Prostate gland (tissue), 2 donors: ENCODE measurements at regions of chr16 and their contacts with region 1.

Region 1: GRCh38 chr16:53503270-53503923 is 388 bp upstream of the AKTIP start:
- DNase-seq: peak; percentile 100
- H3K4me3 ChIP-seq: peak overlapping the region; percentile 84 to 89
- H3K27ac ChIP-seq: peak overlapping the region; percentile 96 to 98
- H3K4me1 ChIP-seq: peaks cover 14% of the 10 kb centered on the region
- H3K27me3 ChIP-seq: no peaks in the 10 kb centered on the region
- CTCF ChIP-seq: peak in 2 of 4 experiments; percentile 4 to 17
- POLR2A ChIP-seq: peak; percentile 96

Region 2: DNA sequence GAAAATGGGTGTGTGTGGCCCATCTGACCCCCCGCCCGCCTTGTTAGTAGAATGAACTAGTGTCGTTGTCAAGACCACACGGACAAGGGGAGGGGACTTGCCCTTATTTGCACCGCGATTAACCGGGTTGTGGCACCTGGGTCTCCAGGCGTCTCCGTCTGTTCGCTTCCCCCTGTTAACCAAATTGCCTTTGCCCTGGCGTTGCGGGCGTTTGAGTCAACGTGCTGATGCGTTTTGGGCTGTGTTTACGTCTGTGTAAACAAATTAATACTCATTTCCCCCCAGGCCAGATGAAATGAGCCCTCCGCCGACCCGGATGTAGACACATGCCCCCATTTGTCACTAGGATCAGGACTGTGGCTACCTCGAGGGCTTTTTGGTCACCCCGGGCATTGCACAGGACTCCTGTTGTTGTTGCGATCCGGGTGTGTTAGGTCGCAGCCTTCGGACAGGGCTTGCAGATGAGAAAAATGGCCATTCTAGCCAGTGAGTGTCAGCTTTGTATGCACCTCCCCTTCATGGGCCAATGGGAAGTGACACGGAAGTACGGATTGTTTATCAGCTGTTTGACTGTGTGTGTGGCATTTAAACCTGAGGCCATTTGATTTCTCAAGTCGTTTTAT is 68.2 kb before region 1 on chr16:
- intact Hi-C with region 1: loop called (anchors 5 kb)
- DNase-seq: peak; percentile 92
- H3K4me3 ChIP-seq: peak overlapping the region; percentile 84 to 100
- H3K27ac ChIP-seq: peak overlapping the region; percentile 94 to 98
- H3K4me1 ChIP-seq: peaks cover 5% of the 10 kb centered on the region
- H3K27me3 ChIP-seq: no peaks in the 10 kb centered on the region
- CTCF ChIP-seq: no peak
- POLR2A ChIP-seq: peak; percentile 66

Region 3: GRCh38 chr16:53457670-53458069 is 45.7 kb before region 1 on chr16:
- intact Hi-C with region 1: no loop called
- DNase-seq: no peak
- H3K4me3 ChIP-seq: no peak overlapping the region
- H3K27ac ChIP-seq: no peak overlapping the region
- H3K4me1 ChIP-seq: no peaks in the 10 kb centered on the region
- H3K27me3 ChIP-seq: no peaks in the 10 kb centered on the region
- CTCF ChIP-seq: no peak
- POLR2A ChIP-seq: no peak

Region 4: GRCh38 chr16:53549970-53550690 is 46.7 kb after region 1 on chr16:
- intact Hi-C with region 1: no loop called
- DNase-seq: peak; percentile 80
- H3K4me3 ChIP-seq: no peak overlapping the region
- H3K27ac ChIP-seq: no peak overlapping the region
- H3K4me1 ChIP-seq: no peaks in the 10 kb centered on the region
- H3K27me3 ChIP-seq: no peaks in the 10 kb centered on the region
- CTCF ChIP-seq: peak in 3 of 4 experiments; percentile 73 to 81 (median 76)
- POLR2A ChIP-seq: no peak

Region 5: DNA sequence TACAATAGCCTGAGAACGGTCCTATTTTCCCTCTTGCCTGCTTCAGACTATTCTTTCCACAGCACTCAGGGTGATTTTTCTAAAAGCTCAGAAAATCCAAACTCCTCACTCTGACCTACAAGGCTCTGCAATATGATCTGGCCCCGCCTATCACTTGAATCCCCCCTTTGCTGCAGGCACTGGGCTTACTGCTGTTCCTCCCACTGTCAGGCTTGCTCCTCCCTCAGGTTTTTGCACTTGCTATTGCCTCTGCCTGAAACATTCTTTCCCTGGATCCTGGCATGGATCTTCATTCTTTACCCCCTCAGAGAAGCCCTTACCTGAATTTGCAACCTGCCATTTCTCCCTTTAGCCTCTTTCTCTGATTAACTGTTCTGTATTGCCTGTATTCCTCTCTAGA is 148.0 kb after region 1 on chr16:
- intact Hi-C with region 1: no loop called
- DNase-seq: no peak
- H3K4me3 ChIP-seq: no peak overlapping the region
- H3K27ac ChIP-seq: no peak overlapping the region
- H3K4me1 ChIP-seq: no peaks in the 10 kb centered on the region
- H3K27me3 ChIP-seq: no peaks in the 10 kb centered on the region
- CTCF ChIP-seq: no peak
- POLR2A ChIP-seq: no peak